Uterus (tissue), 4 donors: ENCODE measurements at regions of chr5 and their contacts with region 1.

Region 1: GRCh38 chr5:72141440-72142355 is 34.4 kb downstream of the MAP1B start:
- DNase-seq: peak; percentile 57 to 62
- H3K4me3 ChIP-seq: no peak overlapping the region
- H3K27ac ChIP-seq: peak overlapping the region; percentile 87 to 88
- H3K4me1 ChIP-seq: peaks cover 4 to 15% of the 10 kb centered on the region in 2 donors
- H3K27me3 ChIP-seq: no peaks in the 10 kb centered on the region
- CTCF ChIP-seq: no peak
- POLR2A ChIP-seq: no peak

Region 2: GRCh38 chr5:71719063-71719964 is 422.4 kb before region 1 on chr5 and contains the start of gene CARTPT:
- intact Hi-C with region 1: no loop called
- DNase-seq: no peak
- H3K4me3 ChIP-seq: no peak within 1 kb of the TSS
- H3K27ac ChIP-seq: no peak within 1 kb of the TSS
- H3K4me1 ChIP-seq: no peaks in the 10 kb centered on the region
- H3K27me3 ChIP-seq: peaks cover 0 to 12% of the 10 kb centered on the region in 2 donors
- CTCF ChIP-seq: no peak
- POLR2A ChIP-seq: no peak
- total RNA-seq, gene CARTPT: not detected

Region 3: DNA sequence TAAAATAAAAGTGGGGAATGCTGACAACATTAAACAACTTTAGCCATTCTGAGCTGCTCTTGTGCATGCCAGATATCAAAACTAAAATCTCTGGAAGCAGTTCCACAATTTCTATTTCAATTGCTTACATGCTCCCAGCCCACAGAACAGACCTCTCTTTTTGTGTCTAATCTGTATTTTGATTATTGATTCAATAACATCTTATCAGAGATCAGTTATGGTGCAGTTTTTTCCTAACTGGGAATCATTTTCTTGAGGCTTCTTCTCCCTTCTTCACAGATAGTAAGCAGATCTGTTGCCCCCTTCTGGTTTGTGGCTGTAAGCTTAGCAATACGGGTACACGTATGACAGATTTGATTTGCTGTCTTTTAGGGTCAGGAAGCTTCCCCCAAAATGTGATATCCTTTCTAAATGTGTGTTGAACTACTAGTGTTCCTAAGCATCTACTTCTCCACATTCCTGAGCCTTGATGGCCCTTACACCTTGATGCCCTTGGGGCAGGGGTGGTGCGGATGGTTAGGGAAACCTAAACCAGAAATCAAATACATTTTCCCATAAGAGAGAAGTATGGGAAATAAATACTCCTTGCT is 139.0 kb after region 1 on chr5:
- intact Hi-C with region 1: loop called (anchors 10 kb)
- DNase-seq: peak in 1 of 2 donors; percentile 34
- H3K4me3 ChIP-seq: no peak overlapping the region
- H3K27ac ChIP-seq: peak overlapping the region; percentile 76 to 90
- H3K4me1 ChIP-seq: peaks cover 0 to 8% of the 10 kb centered on the region in 2 donors
- H3K27me3 ChIP-seq: no peaks in the 10 kb centered on the region
- CTCF ChIP-seq: peak; percentile 30 to 44 (median 40)
- POLR2A ChIP-seq: no peak